HCT116 (cell line): ENCODE measurements at regions of chr3 and their contacts with region 1.

Region 1: GRCh38 chr3:107522510-107523288 is at the start of gene BBX:
- DNase-seq: peak; percentile 93
- ATAC-seq: peak; percentile 86
- H3K4me3 ChIP-seq: peak within 1 kb of the TSS; percentile 78 to 81
- H3K27ac ChIP-seq: peak within 1 kb of the TSS; percentile 86
- H3K4me1 ChIP-seq: peaks cover 3 to 13% of the 10 kb centered on the region in 2 experiments; a peak in 2 of 4 replicates
- H3K27me3 ChIP-seq: no peaks in the 10 kb centered on the region
- CTCF ChIP-seq: no peak
- POLR2A ChIP-seq: peak; percentile 83
- RAD21 ChIP-seq: no peak
- total RNA-seq, gene BBX: 55.6 TPM

Region 2: DNA sequence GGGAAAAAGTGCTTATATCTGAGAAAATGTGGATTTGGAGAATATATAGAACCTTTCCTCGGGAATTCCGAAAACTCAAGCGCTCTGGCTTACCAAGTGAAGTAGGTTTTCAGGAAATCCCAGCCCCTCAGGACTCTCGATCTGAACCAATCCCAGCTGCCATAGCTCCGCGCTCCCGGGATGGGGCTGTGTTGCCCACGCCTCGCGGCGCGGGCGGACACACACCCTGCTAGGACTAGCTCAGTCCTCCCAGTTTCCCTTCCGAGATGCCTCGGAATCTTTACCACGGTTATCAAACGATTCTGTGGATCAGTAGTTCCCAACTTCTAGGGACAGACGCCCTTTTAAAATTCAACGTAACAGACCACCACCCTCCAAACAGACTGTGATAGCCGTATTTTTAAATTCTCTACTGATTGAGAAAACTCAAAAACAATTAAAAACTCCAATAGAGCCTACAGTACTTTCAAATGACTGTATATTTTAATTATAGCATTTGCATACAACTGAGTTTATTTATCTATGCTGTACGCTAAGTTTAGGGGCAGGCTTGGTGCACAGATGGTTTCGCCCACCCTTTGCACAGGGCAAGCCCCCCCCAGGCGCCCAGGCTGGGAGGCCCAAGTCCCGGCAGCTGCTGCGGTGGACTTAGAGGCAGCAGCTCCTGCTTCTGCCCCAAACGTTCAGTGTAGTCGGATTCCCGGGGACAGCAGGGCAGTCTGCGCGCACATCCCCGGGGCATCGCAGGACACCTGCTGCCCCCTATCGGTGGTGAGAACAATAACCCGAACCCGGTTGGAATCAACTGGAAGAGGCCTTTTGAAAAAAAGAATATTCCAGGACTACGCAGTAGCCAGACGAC is 93.1 kb before region 1 on chr3:
- CTCF ChIA-PET with region 1: interaction called, 3 read pairs
- POLR2A ChIA-PET with region 1: interaction called, 3 read pairs
- RAD21 ChIA-PET with region 1: no interaction called
- intact Hi-C with region 1: loop called (anchors 5 kb)
- DNase-seq: peak; percentile 67
- ATAC-seq: peak; percentile 87
- H3K4me3 ChIP-seq: 0 out of 4 replicates have a peak overlapping the region, but pooled peaks of 1 of the 2 experiments have one; percentile 10
- H3K27ac ChIP-seq: no peak overlapping the region
- H3K4me1 ChIP-seq: peaks cover 5 to 33% of the 10 kb centered on the region in 2 experiments; a peak in 3 of 4 replicates
- H3K27me3 ChIP-seq: no peaks in the 10 kb centered on the region
- CTCF ChIP-seq: peak; percentile 61 to 93 (median 86)
- POLR2A ChIP-seq: no peak
- RAD21 ChIP-seq: peak; percentile 74